Activated naive CD4-positive, alpha-beta T cell treated with anti-CD3 and anti-CD28 coated beads for 36 hours (primary cell): ENCODE measurements at regions of chr16 and their contacts with region 1.

Region 1: DNA sequence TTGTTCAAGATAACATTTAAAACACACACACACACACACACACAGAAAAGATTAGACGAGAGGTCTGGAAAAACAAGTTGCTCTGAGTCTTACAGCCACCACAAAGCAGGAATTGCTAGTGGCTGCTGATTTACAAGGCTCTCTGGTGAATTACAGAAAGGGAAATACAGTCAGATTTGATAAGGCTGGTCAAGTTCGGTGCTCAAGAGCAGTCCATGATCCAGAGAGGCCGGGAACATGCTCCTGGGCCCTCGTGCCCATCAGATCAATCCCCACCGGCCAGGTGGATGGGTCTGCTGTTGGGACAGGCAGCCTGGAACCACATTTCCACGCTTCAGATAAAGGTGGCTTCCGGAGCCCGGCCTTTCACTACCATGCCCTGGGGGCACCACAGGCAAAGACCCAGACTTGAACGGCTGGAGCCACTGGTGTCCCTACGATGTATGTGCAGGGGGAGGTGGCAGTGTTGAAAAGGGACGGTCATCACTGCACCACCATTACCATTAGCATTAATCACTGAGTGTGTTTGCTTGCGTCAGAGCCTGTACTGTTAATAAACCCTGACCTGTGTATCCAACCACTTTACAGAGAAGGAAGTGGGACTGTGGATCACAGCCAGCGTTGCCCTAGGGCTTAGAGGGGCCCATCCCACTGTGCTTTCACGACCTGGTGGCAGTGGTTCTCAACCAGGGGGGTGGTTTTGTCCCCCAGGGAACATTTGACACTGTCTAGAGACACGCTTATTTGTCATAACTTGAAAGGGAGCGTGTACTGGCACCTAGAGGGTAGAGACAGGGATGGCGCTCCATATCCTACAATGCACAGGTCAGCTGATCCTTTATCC is 95.1 kb downstream of the XYLT1 start:
- DNase-seq: no peak
- H3K4me3 Mint-ChIP-seq: no peak overlapping the region
- H3K27ac Mint-ChIP-seq: no peak overlapping the region
- H3K4me1 Mint-ChIP-seq: peaks cover 47% of the 10 kb centered on the region
- H3K27me3 Mint-ChIP-seq: no peaks in the 10 kb centered on the region

Region 2: GRCh38 chr16:17346621-17347569 is 28.8 kb before region 1 on chr16:
- CTCF ChIA-PET with region 1: no interaction called
- intact Hi-C with region 1: no loop called
- DNase-seq: peak; percentile 37
- H3K4me3 Mint-ChIP-seq: peak overlapping the region; percentile 51
- H3K27ac Mint-ChIP-seq: peak overlapping the region; percentile 89
- H3K4me1 Mint-ChIP-seq: peaks cover 67% of the 10 kb centered on the region
- H3K27me3 Mint-ChIP-seq: no peaks in the 10 kb centered on the region

Region 3: DNA sequence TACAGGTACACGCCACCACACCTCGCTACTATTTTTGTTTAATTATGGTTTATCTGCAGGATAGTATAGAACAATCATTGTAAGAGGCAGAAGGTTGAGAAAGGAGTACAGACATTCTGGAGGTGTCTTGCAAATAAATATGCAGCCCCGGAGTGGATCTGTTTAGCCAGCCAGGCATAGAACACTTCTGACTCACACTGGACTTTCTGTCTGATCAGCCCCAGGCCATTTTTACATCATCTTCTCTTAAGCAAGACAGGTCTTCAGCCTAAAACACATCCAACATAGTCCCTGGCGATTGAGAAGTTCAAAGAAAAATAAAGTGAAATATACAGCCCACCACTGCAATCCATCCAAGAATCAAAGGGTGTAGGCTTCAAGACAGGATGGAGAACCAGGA is 13.7 kb after region 1 on chr16:
- CTCF ChIA-PET with region 1: no interaction called
- intact Hi-C with region 1: loop called (anchors 2 kb)
- DNase-seq: no peak
- H3K4me3 Mint-ChIP-seq: no peak overlapping the region
- H3K27ac Mint-ChIP-seq: no peak overlapping the region
- H3K4me1 Mint-ChIP-seq: peaks cover 18% of the 10 kb centered on the region
- H3K27me3 Mint-ChIP-seq: no peaks in the 10 kb centered on the region